ENCODE measurements at regions of chr12 and their contacts with region 1.

Region 1: DNA sequence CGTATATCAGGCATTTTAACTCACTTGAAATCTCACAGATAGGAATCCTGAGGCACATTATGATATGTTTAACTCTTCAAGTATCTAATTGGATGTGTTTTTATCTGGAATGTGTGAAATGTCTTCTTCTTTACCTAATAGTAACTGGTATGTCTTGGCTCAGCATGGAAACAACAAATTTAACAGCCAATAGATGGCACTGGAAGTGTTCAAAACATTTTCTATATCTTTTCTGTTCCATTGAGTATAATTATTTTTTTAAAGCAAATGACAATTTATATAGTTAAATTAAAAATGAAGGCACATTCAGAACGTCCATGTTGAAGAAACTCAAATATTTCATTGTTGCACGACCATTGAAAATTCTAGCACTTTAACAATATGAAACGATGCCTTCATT is 164.6 kb upstream of the SLC16A7 start:
- DNase-seq: no peak
- ATAC-seq: no peak
- H3K4me3 ChIP-seq: no peak overlapping the region
- H3K27ac ChIP-seq: no peak overlapping the region
- H3K4me1 ChIP-seq: no peaks in the 10 kb centered on the region
- H3K27me3 ChIP-seq: no peaks in the 10 kb centered on the region
- CTCF ChIP-seq: no peak
- POLR2A ChIP-seq: no peak

Region 2: GRCh38 chr12:59329457-59329856 is 101.8 kb before region 1 on chr12:
- in situ Hi-C with region 1: no loop called
- intact Hi-C with region 1: no loop called
- DNase-seq: no peak
- ATAC-seq: no peak
- H3K4me3 ChIP-seq: no peak overlapping the region
- H3K27ac ChIP-seq: no peak overlapping the region
- H3K4me1 ChIP-seq: no peaks in the 10 kb centered on the region
- H3K27me3 ChIP-seq: no peaks in the 10 kb centered on the region
- CTCF ChIP-seq: no peak
- POLR2A ChIP-seq: no peak

Region 3: DNA sequence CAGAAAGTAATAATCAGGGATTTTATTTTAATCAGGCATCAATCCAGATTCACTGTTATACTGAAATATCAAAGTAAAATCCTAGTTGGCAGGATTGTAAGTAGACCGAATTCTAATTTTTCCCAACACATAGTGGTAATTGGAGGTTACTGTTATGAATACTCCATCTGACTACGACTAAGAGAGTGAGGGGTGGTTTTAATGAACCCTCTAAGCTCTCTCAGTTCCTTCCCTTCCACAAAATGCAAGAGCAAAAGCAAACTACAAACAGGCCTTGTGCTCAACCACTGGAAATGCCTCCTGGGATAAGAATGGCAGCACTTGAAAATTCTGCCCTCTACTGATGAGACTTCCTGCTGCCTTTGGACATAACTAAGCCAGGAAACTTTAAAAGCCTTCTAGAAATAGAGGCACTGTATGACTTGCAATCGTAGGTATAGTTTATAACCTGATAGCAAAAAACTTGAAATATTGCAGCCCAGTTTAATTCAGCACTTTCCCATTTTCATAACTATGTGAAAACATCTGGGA is 349.4 kb after region 1 on chr12:
- in situ Hi-C with region 1: loop called in 1 of 4 experiments (anchors 25 kb)
- intact Hi-C with region 1: no loop called
- DNase-seq: no peak
- ATAC-seq: no peak
- H3K4me3 ChIP-seq: no peak overlapping the region
- H3K27ac ChIP-seq: no peak overlapping the region
- H3K4me1 ChIP-seq: no peaks in the 10 kb centered on the region
- H3K27me3 ChIP-seq: no peaks in the 10 kb centered on the region
- CTCF ChIP-seq: no peak
- POLR2A ChIP-seq: no peak

Region 4: GRCh38 chr12:59808317-59808910 is 377.1 kb after region 1 on chr12:
- in situ Hi-C with region 1: no loop called
- intact Hi-C with region 1: loop called (anchors 2 kb)
- DNase-seq: no peak
- ATAC-seq: peak in 1 of 2 donors; percentile 44
- H3K4me3 ChIP-seq: no peak overlapping the region
- H3K27ac ChIP-seq: no peak overlapping the region
- H3K4me1 ChIP-seq: no peaks in the 10 kb centered on the region
- H3K27me3 ChIP-seq: no peaks in the 10 kb centered on the region
- CTCF ChIP-seq: peak in 4 of 5 experiments; percentile 41 to 56 (median 47)
- POLR2A ChIP-seq: no peak